ENCODE measurements at regions of chr22 and their contacts with region 1.

Region 1: DNA sequence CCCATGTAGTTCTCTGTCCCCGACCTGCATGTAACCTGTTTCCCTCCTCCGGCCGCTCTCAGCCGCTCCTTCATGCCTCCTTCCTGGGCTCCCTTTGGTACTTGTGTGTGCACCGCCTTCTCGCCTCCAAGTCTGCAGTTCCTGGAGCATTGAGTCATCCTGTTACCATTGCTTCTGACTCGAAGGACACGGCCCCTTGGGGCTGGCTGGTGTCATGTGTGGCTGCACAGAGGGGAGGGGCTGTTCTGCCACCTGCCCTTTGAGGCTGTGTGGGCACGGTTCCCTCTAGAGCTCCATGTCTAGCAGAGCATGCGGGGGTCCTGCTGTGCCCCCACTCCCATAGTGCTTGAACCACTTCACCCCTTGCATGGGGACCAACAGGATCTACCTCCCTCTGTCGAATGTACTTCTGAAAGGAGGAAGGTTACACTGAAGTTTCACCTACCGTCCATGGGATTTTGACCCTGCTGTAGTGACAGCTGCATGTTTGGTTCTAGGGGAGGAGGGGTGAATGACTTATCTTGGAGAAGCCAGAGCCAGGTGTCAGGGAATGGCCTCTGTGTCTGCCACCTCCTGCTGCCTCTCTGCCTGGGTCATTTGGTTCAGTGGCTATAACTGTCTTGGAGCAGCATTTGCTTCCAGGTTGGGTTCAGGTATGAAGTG is 39.6 kb downstream of the BCR start:
- DNase-seq: peak; percentile 91
- H3K4me3 ChIP-seq: peak overlapping the region; percentile 65
- H3K27ac ChIP-seq: peak overlapping the region; percentile 83
- H3K4me1 ChIP-seq: peaks cover 59% of the 10 kb centered on the region
- CTCF ChIP-seq: no peak

Region 2: DNA sequence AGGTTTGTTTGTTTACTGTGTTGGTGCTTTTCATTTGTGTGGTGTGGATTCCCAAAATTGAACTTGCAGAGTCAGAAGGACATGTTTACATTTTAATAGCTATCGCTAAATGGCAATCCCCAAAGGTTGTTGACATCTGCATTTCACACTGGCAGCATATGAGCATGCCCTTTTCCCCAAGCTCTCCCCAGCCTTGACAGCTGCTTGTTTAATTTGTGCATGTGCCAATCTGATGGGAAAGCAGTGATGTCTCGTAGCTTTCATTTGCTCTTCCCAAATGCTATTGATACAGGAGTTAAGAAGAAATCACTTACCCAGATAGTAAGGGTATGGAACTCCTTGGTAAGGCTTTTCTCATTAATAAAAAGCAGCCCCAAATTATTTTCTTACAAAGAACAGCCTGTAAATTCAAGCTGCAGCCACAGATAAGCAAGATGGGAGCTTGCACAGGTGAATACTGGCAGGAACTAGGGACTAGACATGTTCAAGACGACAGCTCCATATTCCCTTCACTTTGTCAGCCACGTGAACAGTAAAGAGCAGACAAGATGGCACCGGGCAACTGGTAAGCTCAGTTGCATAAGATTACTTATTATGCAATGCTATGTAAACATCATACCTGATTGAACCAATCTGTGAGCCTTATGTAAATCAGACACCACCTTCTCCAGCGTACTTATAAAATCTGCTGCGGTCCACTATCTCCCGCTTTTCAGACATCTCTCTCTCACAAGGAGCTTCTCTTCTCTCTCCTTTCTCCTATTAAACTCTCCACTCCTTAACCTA is 245.0 kb before region 1 on chr22:
- CTCF ChIA-PET with region 1: no interaction called
- POLR2A ChIA-PET with region 1: no interaction called
- intact Hi-C with region 1: no loop called
- DNase-seq: no peak
- H3K4me3 ChIP-seq: no peak overlapping the region
- H3K27ac ChIP-seq: no peak overlapping the region
- H3K4me1 ChIP-seq: peaks cover 9% of the 10 kb centered on the region
- CTCF ChIP-seq: no peak

Region 3: DNA sequence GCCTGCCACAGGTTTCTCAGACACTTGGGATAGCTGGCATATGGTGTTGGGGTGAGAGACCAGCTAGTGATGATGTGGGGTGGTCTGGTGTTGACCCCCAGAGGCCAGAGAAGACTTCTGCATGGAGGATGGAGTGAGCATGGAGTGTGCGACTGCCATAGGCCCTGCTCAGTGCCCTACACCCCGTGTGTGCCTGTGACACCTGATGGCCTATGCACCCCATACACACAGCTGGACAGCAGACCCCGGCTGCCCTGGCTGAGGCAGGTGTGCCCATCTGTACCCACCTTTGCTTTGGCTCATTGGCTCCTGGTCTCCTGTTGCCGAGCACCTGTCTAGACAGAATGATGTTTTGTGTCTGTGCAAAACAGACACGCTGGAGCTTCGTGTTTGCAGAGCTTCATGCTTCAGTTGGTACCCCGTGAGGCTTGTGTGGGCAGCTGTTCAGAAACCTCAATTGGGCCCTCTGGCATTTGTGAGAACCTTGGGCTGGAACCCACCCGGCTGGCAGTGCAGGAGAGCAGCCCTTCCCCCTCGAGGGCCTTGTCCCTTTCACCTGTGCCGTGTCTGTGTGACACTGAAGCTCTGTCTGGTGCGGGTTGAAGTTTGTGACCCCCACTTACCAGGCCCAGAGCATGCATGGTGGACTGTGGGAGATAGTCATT is 12.1 kb before region 1 on chr22:
- CTCF ChIA-PET with region 1: interaction called, 8 read pairs
- POLR2A ChIA-PET with region 1: interaction called, 7 read pairs
- intact Hi-C with region 1: loop called (anchors 1 kb)
- DNase-seq: peak; percentile 92
- H3K4me3 ChIP-seq: peak overlapping the region; percentile 21
- H3K27ac ChIP-seq: peak overlapping the region; percentile 82
- H3K4me1 ChIP-seq: peaks cover 66% of the 10 kb centered on the region
- CTCF ChIP-seq: no peak

Measured in OCI-LY7 (cell line).